ENCODE measurements at regions of chr22 and their contacts with region 1.

Region 1: GRCh38 chr22:49392841-49393510 is 434.7 kb downstream of the BRD1 start:
- DNase-seq: no peak
- ATAC-seq: no peak
- H3K4me3 ChIP-seq: no peak overlapping the region
- H3K27ac ChIP-seq: no peak overlapping the region
- H3K4me1 ChIP-seq: no peaks in the 10 kb centered on the region
- CTCF ChIP-seq: no peak
- EP300 ChIP-seq: no peak
- POLR2A ChIP-seq: no peak
- RAD21 ChIP-seq: no peak

Region 2: GRCh38 chr22:47891609-47892008 is 1501.4 kb before region 1 on chr22:
- CTCF ChIA-PET with region 1: no interaction called
- POLR2A ChIA-PET with region 1: interaction called, 10 read pairs
- DNase-seq: no peak
- ATAC-seq: no peak
- H3K4me3 ChIP-seq: no peak overlapping the region
- H3K27ac ChIP-seq: no peak overlapping the region
- H3K4me1 ChIP-seq: no peaks in the 10 kb centered on the region
- CTCF ChIP-seq: no peak
- EP300 ChIP-seq: no peak
- POLR2A ChIP-seq: no peak
- RAD21 ChIP-seq: no peak